ENCODE measurements at regions of chr9 and their contacts with region 1.

Region 1: GRCh38 chr9:126704873-126705766 is 91.4 kb downstream of the LMX1B start:
- DNase-seq: peak; percentile 93
- H3K4me3 ChIP-seq: peak overlapping the region in 1 of 2 experiments; percentile 34; a peak in 1 of 4 replicates
- H3K27ac ChIP-seq: no peak overlapping the region
- H3K4me1 ChIP-seq: peaks cover 0 to 5% of the 10 kb centered on the region in 2 experiments; a peak in 1 of 4 replicates
- H3K27me3 ChIP-seq: peaks cover 34% of the 10 kb centered on the region; the same call in 1 of the 2 replicates
- CTCF ChIP-seq: peak; percentile 82
- EP300 ChIP-seq: no peak
- RAD21 ChIP-seq: peak; percentile 78

Region 2: DNA sequence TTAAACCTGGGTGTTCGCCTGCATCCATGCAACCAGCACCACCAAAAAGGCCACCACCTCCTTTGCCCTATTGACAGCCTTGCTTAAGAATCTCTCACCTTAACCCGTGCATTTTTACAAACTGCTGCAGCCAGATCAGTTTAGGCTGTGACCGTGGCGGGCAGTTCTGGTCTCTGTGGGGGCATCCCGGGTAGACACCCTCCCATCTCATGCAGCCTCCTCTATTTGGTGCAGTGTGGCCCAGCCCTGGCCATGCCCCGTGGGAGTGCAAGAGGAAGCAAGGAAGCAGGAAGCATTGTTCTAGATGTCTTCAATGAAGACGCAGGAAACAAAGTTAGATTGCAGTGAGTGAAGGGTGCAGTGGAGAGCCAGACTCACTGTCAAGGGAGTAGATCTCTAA is 487.3 kb before region 1 on chr9:
- CTCF ChIA-PET with region 1: no interaction called
- POLR2A ChIA-PET with region 1: no interaction called
- DNase-seq: no peak
- H3K4me3 ChIP-seq: no peak overlapping the region
- H3K27ac ChIP-seq: no peak overlapping the region
- H3K4me1 ChIP-seq: no peaks in the 10 kb centered on the region
- H3K27me3 ChIP-seq: peaks cover 4% of the 10 kb centered on the region; the same call in 1 of the 2 replicates
- CTCF ChIP-seq: no peak
- EP300 ChIP-seq: no peak
- RAD21 ChIP-seq: no peak

Region 3: DNA sequence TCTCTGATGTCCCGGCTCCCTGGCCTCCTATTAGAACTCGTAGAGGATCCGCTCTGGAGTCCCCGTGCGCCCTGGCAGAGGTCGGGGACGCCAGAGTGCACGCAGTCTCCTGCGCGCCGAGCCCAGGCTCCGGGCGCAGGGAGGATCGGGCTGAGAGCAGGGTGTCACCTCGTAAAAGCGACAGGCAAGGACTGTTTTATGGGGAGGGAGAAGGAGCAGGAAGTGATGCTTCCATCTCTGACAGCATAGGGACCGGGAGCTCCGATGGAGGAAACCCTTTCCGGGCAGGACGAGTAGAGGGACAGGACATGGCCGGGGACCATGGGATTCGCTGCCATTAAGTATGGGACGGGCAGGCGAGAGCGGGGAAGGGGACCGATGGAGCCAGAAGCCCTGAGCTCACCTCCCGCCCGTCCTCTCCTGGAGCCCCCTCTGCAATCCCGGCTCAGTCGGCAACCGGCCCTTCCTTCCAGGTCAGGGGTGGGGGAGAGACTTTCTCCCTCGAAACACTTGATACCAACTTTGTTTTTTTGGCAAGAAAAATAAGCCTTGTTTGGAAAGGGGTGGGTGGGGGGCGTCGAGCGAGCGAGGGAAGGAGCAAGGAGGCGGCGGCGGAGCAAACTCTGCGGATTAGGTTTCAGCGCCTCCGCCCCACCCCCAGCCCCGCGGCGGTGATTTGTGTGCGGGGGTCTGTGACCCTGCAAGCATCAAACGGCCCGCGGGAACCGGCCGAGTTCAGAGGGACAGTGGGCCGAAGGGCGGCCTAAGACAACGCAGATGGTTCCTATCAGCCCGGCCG is 78.8 kb before region 1 on chr9:
- CTCF ChIA-PET with region 1: interaction called, 12 read pairs
- POLR2A ChIA-PET with region 1: no interaction called
- DNase-seq: no peak
- H3K4me3 ChIP-seq: no peak overlapping the region; a peak in 1 of 4 replicates
- H3K27ac ChIP-seq: no peak overlapping the region
- H3K4me1 ChIP-seq: peaks cover 0 to 17% of the 10 kb centered on the region in 2 experiments; a peak in 2 of 4 replicates
- H3K27me3 ChIP-seq: peaks cover 100% of the 10 kb centered on the region
- CTCF ChIP-seq: no peak
- EP300 ChIP-seq: no peak
- RAD21 ChIP-seq: no peak

Region 4: GRCh38 chr9:126673689-126674364 is 31.3 kb before region 1 on chr9:
- CTCF ChIA-PET with region 1: interaction called, 29 read pairs
- POLR2A ChIA-PET with region 1: no interaction called
- DNase-seq: peak; percentile 76
- H3K4me3 ChIP-seq: no peak overlapping the region
- H3K27ac ChIP-seq: no peak overlapping the region
- H3K4me1 ChIP-seq: peaks cover 0 to 18% of the 10 kb centered on the region in 2 experiments; a peak in 1 of 4 replicates
- H3K27me3 ChIP-seq: peaks cover 39% of the 10 kb centered on the region
- CTCF ChIP-seq: no peak
- EP300 ChIP-seq: no peak
- RAD21 ChIP-seq: no peak

Region 5: GRCh38 chr9:126752376-126752775 is 47.3 kb after region 1 on chr9:
- CTCF ChIA-PET with region 1: interaction called, 14 read pairs
- POLR2A ChIA-PET with region 1: no interaction called
- DNase-seq: no peak
- H3K4me3 ChIP-seq: no peak overlapping the region
- H3K27ac ChIP-seq: no peak overlapping the region
- H3K4me1 ChIP-seq: no peaks in the 10 kb centered on the region
- H3K27me3 ChIP-seq: peaks cover 13% of the 10 kb centered on the region
- CTCF ChIP-seq: no peak
- EP300 ChIP-seq: no peak
- RAD21 ChIP-seq: no peak

Region 6: DNA sequence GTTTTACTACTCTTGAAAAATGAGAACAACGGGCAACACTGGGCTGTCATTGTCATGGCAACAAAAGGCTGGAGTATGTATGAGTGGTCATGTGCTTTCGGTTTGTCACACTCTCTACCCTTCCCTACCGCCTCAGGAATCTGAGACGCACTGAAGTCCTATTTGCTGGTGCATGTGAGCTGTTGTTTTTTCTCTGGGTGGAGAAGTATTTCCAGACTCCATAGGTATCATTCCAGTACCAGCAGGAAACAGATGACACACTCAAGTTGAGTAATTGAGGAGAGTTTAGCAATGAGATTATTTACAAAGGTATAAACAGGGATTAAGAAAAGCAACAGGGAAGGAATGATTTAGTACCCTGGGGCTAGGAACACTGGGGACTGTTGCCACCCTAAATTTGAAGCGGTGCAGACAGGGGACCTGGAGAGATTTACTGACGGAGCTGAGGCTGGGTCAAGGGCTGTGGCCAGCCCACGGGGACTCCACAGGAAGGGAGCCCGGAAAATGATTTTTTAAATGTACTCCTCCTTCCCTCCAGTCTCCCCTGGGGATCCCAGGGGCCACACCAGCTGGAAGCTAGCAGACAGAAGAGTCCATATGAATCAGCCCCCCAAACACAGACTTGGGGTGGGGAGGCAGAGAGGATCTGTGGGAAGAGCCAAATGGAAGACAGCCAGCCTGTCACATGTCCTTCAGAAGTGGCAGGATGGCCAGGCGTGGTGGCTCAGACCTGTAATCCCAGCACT is 86.5 kb after region 1 on chr9:
- CTCF ChIA-PET with region 1: interaction called, 502 read pairs
- POLR2A ChIA-PET with region 1: no interaction called
- DNase-seq: no peak
- H3K4me3 ChIP-seq: no peak overlapping the region
- H3K27ac ChIP-seq: no peak overlapping the region
- H3K4me1 ChIP-seq: peaks cover 0 to 2% of the 10 kb centered on the region in 2 experiments; a peak in 1 of 4 replicates
- H3K27me3 ChIP-seq: no peaks in the 10 kb centered on the region
- CTCF ChIP-seq: no peak
- EP300 ChIP-seq: no peak
- RAD21 ChIP-seq: no peak

Measured in SK-N-SH (cell line).